Activated CD4-positive, alpha-beta T cell treated with anti-CD3 and anti-CD28 coated beads for 36 hours (primary cell): ENCODE measurements at regions of chr2 and their contacts with region 1.

Region 1: DNA sequence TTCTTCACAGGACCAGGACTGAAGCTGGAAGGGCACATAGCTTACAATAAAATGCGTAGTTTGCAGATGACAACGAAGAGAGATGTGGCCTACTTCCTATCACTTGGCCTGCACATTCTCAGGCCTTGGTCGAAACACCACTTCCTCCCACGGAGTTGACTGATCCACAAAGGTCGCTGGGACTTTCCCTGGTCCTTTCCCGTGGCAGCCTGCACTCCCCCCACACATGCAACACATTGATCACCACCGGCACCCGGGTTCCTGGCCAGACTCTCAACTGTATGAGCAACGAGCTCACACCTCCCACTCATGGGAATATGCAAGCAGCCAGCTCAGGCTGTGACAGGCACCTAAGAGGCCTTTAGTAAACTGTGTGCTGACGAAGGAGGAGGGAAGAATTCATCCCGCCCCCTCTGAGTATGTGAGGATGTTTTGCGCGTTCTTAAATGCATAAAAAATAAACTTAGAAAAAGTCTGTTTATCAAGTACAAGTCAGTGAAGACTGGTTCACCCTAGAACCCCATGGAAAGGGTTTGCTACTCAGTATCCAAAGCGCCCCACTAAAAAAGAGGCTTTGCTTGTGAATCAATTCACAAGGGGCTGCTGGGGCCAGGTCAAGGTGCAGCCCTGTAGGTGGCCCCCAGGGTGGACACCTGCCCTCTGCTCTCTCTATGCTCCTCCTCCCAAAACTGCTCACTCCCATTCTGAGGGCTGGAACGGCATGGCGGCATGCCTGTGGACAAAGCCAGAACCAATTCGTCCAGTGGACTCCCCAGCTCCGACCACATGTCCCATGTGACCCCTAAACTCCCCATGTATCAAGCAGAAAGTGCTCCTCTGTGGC is 154.3 kb downstream of the EIPR1 start:
- DNase-seq: peak; percentile 96
- ATAC-seq: peak; percentile 92
- H3K4me3 Mint-ChIP-seq: peak overlapping the region; percentile 51
- H3K27ac Mint-ChIP-seq: peak overlapping the region; percentile 99
- H3K4me1 Mint-ChIP-seq: peaks cover 40% of the 10 kb centered on the region
- H3K27me3 Mint-ChIP-seq: no peaks in the 10 kb centered on the region

Region 2: GRCh38 chr2:3126911-3127621 is 96.2 kb before region 1 on chr2:
- CTCF ChIA-PET with region 1: no interaction called
- POLR2A ChIA-PET with region 1: no interaction called
- intact Hi-C with region 1: no loop called
- DNase-seq: peak; percentile 14
- ATAC-seq: peak; percentile 65
- H3K4me3 Mint-ChIP-seq: no peak overlapping the region
- H3K27ac Mint-ChIP-seq: no peak overlapping the region
- H3K4me1 Mint-ChIP-seq: peaks cover under 1% of the 10 kb centered on the region
- H3K27me3 Mint-ChIP-seq: peaks cover 4% of the 10 kb centered on the region

Region 3: DNA sequence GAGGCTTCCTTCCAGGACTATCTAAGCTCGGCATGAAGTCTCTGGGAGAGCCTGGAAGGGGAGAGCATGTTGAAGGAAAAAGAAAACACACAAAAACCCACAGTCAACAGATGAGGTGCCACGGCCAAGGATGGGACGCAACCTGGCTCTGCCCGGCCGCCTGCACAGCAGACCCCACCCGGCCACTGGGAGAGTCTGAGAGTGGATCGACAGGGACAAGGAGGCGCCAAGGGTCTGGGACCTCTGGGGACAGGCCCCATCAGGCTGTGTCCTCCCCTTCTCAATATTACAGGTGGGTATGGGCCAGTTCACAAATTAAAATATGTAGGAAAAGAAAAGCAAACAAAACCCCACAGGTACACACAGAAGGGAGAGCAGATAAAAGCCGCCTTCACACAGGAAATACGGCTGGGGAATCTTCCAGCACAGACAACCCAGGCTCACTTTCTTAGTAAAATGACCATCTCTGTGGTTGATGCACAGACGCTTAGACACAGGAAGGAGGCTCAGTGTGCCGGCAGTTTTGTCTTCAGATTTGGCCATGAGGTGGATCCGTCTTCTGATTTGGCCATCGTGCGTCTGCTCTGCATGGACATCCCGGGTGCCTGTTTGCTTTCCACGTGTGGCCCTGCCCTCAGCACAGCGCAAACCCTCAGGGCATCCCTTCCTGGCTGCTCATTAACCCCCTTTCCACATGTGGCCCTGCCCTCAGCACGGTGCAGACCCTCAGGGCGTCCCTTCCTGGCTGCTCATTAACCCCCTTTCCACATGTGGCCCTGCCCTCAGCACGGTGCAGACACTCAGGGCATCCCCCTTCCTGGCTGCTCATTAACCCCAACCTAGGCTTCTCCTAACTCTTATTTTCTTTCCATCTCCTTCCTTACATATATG is 15.9 kb after region 1 on chr2:
- CTCF ChIA-PET with region 1: interaction called, 3 read pairs
- POLR2A ChIA-PET with region 1: interaction called, 7 read pairs
- intact Hi-C with region 1: loop called (anchors 1 kb)
- DNase-seq: peak; percentile 52
- ATAC-seq: peak; percentile 86
- H3K4me3 Mint-ChIP-seq: peak overlapping the region; percentile 1
- H3K27ac Mint-ChIP-seq: no peak overlapping the region
- H3K4me1 Mint-ChIP-seq: peaks cover 51% of the 10 kb centered on the region
- H3K27me3 Mint-ChIP-seq: no peaks in the 10 kb centered on the region

Region 4: DNA sequence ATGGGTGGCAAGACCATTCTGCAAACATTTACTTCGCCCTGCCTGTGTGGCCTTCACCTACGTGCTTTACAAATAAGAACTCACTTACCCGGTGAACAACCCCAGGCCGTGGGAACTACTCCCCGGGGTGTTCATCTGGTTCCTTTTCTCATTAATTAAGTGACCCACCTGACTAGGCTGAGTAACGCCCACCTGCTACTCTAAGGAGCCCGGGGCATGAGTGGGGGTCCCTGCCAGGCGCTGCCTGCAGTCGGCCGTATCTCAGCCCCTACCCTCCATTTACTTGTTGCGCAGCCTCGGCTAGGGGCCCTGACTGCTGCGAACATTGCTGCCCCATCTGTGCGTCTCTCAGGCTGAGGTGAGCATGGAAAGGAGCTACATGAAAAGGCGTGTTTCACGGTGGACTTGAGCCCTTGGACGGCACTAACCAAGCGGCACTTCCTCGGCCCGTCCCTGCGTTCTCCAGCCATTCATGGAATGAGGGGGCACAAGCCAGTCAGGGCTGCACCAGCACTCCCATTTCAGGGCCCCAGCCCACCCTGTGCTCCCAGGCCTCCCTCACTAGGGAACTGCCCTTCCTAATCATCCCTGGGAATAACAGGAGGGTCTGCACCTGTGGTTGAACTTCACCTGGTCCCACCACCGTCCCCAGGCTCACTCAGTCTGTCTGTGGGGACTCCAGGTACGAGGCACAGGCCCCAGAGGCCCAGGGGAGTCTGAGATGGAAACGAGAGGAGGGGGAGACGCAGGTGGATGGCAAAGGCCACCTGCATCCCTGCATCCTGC is 54.4 kb after region 1 on chr2:
- CTCF ChIA-PET with region 1: no interaction called
- POLR2A ChIA-PET with region 1: no interaction called
- intact Hi-C with region 1: loop called in 1 of 2 experiments (anchors 2 kb)
- DNase-seq: no peak
- ATAC-seq: no peak
- H3K4me3 Mint-ChIP-seq: no peak overlapping the region
- H3K27ac Mint-ChIP-seq: no peak overlapping the region
- H3K4me1 Mint-ChIP-seq: peaks cover 8% of the 10 kb centered on the region
- H3K27me3 Mint-ChIP-seq: no peaks in the 10 kb centered on the region

Region 5: DNA sequence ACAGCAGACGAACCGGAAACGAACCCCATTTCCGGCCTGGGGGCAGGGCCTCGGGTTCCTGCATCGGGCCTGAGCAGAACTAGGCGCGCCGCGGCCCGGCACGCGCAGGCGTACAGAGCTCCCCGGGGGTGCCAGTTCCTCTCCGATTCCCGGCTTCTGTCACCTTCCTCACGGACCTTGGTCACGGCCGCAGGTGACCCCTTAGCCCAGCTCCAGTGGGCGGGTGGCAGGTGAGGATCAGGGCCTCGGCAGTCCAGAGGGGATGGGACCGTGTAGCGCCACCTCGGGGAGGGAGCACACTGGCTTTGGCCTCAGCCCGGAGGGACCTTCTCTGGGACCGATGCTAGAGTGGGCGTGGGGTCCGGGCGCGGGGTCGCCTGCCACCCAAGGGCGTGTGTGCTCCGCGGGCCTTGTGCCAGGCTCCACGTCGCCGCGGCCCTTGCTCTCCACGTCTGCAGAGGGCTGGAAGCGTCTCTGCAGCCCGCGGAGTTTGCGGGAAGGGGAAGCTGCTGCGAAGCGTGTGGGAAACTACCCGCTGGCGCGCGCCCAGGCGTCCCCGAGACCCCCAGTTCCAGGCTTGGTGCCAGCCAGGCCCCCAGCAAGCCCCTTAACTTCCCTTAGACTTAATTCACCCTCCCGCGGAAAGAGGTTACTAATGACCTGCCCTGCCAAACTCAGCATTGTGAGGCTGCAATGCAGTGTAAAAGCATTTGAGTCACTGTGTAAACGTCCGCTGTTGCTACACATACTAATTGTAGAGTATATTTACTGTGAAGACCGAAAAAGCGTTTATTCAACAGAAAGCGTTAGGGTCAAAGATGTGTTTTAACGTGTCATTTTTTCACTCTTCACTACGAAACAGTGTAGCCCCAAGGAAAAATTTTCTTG is 156.6 kb after region 1 on chr2 and contains the start of gene TRAPPC12:
- CTCF ChIA-PET with region 1: interaction called, 3 read pairs
- POLR2A ChIA-PET with region 1: no interaction called
- intact Hi-C with region 1: loop called (anchors 1 kb)
- DNase-seq: peak; percentile 95
- ATAC-seq: peak; percentile 70
- H3K4me3 Mint-ChIP-seq: peak within 1 kb of the TSS; percentile 98
- H3K27ac Mint-ChIP-seq: peak within 1 kb of the TSS; percentile 96
- H3K4me1 Mint-ChIP-seq: peaks cover 50% of the 10 kb centered on the region
- H3K27me3 Mint-ChIP-seq: no peaks in the 10 kb centered on the region
- total RNA-seq, gene TRAPPC12: 60.0 to 73.1 TPM

Region 6: DNA sequence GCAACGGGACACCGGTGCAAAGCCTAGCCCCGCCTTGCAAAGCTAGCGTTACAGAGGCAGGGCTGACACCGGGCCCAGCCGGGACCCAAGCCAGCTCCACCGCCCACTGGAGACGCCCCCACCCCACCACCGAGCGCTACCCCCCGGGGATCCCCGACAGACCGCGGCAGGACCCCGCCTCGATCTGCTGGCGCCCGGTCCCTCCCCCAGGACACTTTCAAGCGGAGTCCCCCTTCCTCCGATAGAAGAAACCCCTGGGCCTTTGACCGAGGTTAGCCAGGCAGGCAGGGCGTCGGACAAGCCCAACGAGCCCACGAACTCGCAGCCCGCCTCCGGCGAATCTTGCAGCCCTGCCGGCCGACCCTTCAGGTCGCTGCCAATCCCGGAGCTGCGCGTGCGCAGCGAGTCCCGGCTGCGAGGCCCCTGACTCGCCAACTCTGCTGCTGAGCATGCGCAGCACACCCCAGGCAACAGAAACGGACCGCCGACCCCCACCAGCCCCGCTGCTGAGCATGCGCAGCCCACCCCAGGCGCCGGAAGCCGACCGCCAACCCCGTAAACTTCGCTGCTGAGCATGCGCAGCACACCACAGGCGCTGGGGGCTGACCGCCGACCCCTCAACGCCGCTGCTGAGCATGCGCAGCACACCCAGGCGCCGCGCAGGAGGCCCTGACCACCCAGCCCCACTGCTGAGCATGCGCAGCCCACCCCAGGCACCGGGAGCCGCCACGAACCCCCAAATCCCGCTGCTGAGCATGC is 295.4 kb after region 1 on chr2:
- CTCF ChIA-PET with region 1: no interaction called
- POLR2A ChIA-PET with region 1: no interaction called
- intact Hi-C with region 1: loop called in 1 of 2 experiments (anchors 1 kb)
- DNase-seq: peak; percentile 99
- ATAC-seq: peak; percentile 83
- H3K4me3 Mint-ChIP-seq: peak overlapping the region; percentile 84
- H3K27ac Mint-ChIP-seq: peak overlapping the region; percentile 83
- H3K4me1 Mint-ChIP-seq: peaks cover 38% of the 10 kb centered on the region
- H3K27me3 Mint-ChIP-seq: no peaks in the 10 kb centered on the region

Region 7: DNA sequence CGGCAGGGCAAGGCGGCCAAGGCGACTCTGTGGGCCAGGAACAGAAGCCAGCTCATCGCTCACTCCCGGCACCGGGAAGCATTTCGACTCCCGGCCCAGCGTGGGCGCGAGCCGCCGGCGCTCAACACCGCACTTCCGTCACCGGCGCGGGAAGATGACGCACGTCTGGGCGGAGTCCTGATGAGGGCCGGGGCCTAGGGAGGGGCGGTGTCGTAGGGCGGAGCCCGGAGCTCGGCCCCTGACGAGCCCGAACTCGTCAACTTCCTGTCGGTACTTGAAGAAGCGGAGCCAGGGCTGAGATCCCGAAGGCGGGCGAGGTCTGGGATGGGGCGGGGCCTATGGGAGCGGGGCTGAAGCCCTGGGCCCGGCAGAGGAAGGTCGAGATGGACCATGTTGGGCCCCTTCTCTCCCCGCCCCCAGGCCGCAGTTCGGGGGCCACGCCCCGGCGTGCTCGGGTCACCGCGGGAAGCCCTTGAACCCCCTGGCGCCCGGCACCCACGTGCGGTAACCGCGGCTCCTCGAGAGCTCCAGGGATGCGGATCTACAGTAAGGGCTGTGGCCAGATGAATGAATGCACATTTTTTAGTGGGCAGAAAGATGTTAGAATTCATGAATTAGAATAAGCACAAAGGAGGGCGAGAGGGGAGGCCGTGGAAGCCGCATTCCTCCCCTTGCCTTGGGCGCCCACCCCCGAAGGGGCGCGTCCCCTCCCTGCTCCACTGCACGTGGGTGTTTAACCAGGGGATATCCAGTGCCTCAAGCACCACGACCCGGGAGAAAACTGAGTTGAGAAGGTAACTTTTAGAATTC is 335.1 kb after region 1 on chr2 and contains the start of gene RNASEH1:
- CTCF ChIA-PET with region 1: no interaction called
- POLR2A ChIA-PET with region 1: no interaction called
- intact Hi-C with region 1: loop called in 1 of 2 experiments (anchors 1 kb)
- DNase-seq: peak; percentile 99
- ATAC-seq: peak; percentile 99
- H3K4me3 Mint-ChIP-seq: peak within 1 kb of the TSS; percentile 91
- H3K27ac Mint-ChIP-seq: peak within 1 kb of the TSS; percentile 96
- H3K4me1 Mint-ChIP-seq: peaks cover 34% of the 10 kb centered on the region
- H3K27me3 Mint-ChIP-seq: no peaks in the 10 kb centered on the region
- total RNA-seq, gene RNASEH1: 14.6 to 24.0 TPM

Region 8: GRCh38 chr2:3575534-3576262 is 352.4 kb after region 1 on chr2:
- CTCF ChIA-PET with region 1: interaction called, 3 read pairs
- POLR2A ChIA-PET with region 1: no interaction called
- intact Hi-C with region 1: loop called in 1 of 2 experiments (anchors 2 kb)
- DNase-seq: peak; percentile 45
- ATAC-seq: peak; percentile 8
- H3K4me3 Mint-ChIP-seq: peak overlapping the region; percentile 94
- H3K27ac Mint-ChIP-seq: peak overlapping the region; percentile 92
- H3K4me1 Mint-ChIP-seq: peaks cover 47% of the 10 kb centered on the region
- H3K27me3 Mint-ChIP-seq: no peaks in the 10 kb centered on the region